ENCODE measurements at regions of chr15 and their contacts with region 1.

Region 1: GRCh38 chr15:89888214-89888804 is 5.5 kb downstream of the AP3S2 start:
- DNase-seq: peak; percentile 44 to 69
- ATAC-seq: peak; percentile 90
- H3K4me3 ChIP-seq: no peak overlapping the region
- H3K27ac ChIP-seq: no peak overlapping the region
- H3K4me1 ChIP-seq: peaks cover 14% of the 10 kb centered on the region; the same call in 2 of the 3 replicates
- CTCF ChIP-seq: peak; percentile 79
- EP300 ChIP-seq: no peak
- POLR2A ChIP-seq: no peak
- RAD21 ChIP-seq: peak; percentile 76 to 84

Region 2: GRCh38 chr15:89728254-89728653 is 160.1 kb before region 1 on chr15:
- CTCF ChIA-PET with region 1: interaction called, 24 read pairs
- POLR2A ChIA-PET with region 1: no interaction called
- DNase-seq: no peak
- ATAC-seq: no peak
- H3K4me3 ChIP-seq: no peak overlapping the region
- H3K27ac ChIP-seq: no peak overlapping the region
- H3K4me1 ChIP-seq: no peaks in the 10 kb centered on the region
- CTCF ChIP-seq: no peak
- EP300 ChIP-seq: no peak
- POLR2A ChIP-seq: no peak
- RAD21 ChIP-seq: no peak

Region 3: GRCh38 chr15:89740137-89740536 is 148.2 kb before region 1 on chr15:
- CTCF ChIA-PET with region 1: interaction called, 110 read pairs
- POLR2A ChIA-PET with region 1: interaction called, 3 read pairs
- DNase-seq: peak; percentile 83 to 85
- ATAC-seq: peak; percentile 87 to 95
- H3K4me3 ChIP-seq: no peak overlapping the region
- H3K27ac ChIP-seq: peak overlapping the region in 1 of 2 experiments; percentile 36; a peak in 1 of 6 replicates
- H3K4me1 ChIP-seq: no peaks in the 10 kb centered on the region
- CTCF ChIP-seq: peak; percentile 96
- EP300 ChIP-seq: no peak
- POLR2A ChIP-seq: no peak
- RAD21 ChIP-seq: peak; percentile 89 to 95

Region 4: GRCh38 chr15:89750560-89751542 is 137.5 kb before region 1 on chr15 and contains the start of gene MESP1:
- CTCF ChIA-PET with region 1: interaction called, 110 read pairs
- POLR2A ChIA-PET with region 1: interaction called, 4 read pairs
- DNase-seq: peak; percentile 96
- ATAC-seq: peak; percentile 94 to 98
- H3K4me3 ChIP-seq: peak within 1 kb of the TSS; percentile 60
- H3K27ac ChIP-seq: peak within 1 kb of the TSS; percentile 81 to 91
- H3K4me1 ChIP-seq: peaks cover 23% of the 10 kb centered on the region
- CTCF ChIP-seq: peak; percentile 74
- EP300 ChIP-seq: no peak
- POLR2A ChIP-seq: peak; percentile 93
- RAD21 ChIP-seq: peak; percentile 51 to 64
- polyA plus RNA-seq, gene MESP1: 1.2 and 1.7 TPM in 2 replicates

Region 5: DNA sequence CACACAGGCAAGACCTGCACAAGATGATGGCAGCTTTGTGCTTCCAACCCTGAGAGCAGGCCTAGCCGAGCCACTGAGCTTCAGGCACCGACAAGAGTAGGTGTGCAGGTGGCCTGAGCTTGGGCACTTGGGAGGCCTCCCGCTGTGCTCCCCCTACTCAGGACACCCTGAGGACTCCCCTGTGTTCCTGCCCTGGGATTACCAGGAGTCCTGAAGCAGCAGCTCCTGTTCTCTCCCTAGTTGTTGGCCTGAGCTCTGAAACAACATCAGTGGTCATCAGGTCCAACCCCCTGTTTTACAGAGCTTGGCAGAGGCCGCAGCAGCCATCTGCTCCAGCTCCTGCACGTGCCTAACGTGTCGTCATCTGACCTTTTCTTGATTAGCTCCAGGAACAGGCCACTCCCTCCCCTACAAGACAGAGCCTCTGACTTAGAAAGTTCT is 120.2 kb before region 1 on chr15:
- CTCF ChIA-PET with region 1: interaction called, 239 read pairs
- POLR2A ChIA-PET with region 1: no interaction called
- DNase-seq: no peak
- ATAC-seq: peak in 1 of 2 experiments; percentile 17; a peak in 3 of 6 replicates
- H3K4me3 ChIP-seq: no peak overlapping the region
- H3K27ac ChIP-seq: peak overlapping the region in 1 of 2 experiments; percentile 42; a peak in 1 of 6 replicates
- H3K4me1 ChIP-seq: peaks cover 14% of the 10 kb centered on the region
- CTCF ChIP-seq: no peak
- EP300 ChIP-seq: no peak
- POLR2A ChIP-seq: no peak
- RAD21 ChIP-seq: no peak

Region 6: GRCh38 chr15:89912674-89913396 is 24.5 kb after region 1 on chr15 and contains the start of gene ARPIN:
- CTCF ChIA-PET with region 1: interaction called, 10 read pairs
- POLR2A ChIA-PET with region 1: interaction called, 10 read pairs
- DNase-seq: peak; percentile 63 to 77
- ATAC-seq: peak; percentile 81 to 90
- H3K4me3 ChIP-seq: peak within 1 kb of the TSS; percentile 68
- H3K27ac ChIP-seq: peak within 1 kb of the TSS; percentile 78 to 97
- H3K4me1 ChIP-seq: peaks cover 28% of the 10 kb centered on the region
- CTCF ChIP-seq: no peak
- EP300 ChIP-seq: no peak
- POLR2A ChIP-seq: peak; percentile 59
- RAD21 ChIP-seq: no peak
- polyA plus RNA-seq, gene ARPIN: 19.4 and 20.3 TPM in 2 replicates

Region 7: GRCh38 chr15:90080818-90081385 is 192.6 kb after region 1 on chr15:
- CTCF ChIA-PET with region 1: interaction called, 13 read pairs
- POLR2A ChIA-PET with region 1: no interaction called
- DNase-seq: no peak
- ATAC-seq: no peak; a peak in 1 of 6 replicates
- H3K4me3 ChIP-seq: no peak overlapping the region
- H3K27ac ChIP-seq: no peak overlapping the region
- H3K4me1 ChIP-seq: no peaks in the 10 kb centered on the region
- CTCF ChIP-seq: no peak
- EP300 ChIP-seq: no peak
- POLR2A ChIP-seq: no peak
- RAD21 ChIP-seq: no peak

Region 8: GRCh38 chr15:90227336-90227735 is 339.0 kb after region 1 on chr15:
- CTCF ChIA-PET with region 1: no interaction called
- POLR2A ChIA-PET with region 1: no interaction called
- DNase-seq: no peak
- ATAC-seq: no peak
- H3K4me3 ChIP-seq: no peak overlapping the region
- H3K27ac ChIP-seq: no peak overlapping the region
- H3K4me1 ChIP-seq: peaks cover 14% of the 10 kb centered on the region
- CTCF ChIP-seq: no peak
- EP300 ChIP-seq: no peak
- POLR2A ChIP-seq: no peak
- RAD21 ChIP-seq: no peak

Measured in A549 (cell line).